Right ventricle myocardium inferior (tissue), 1 donor: ENCODE measurements at regions of chr12 and their contacts with region 1.

Region 1: DNA sequence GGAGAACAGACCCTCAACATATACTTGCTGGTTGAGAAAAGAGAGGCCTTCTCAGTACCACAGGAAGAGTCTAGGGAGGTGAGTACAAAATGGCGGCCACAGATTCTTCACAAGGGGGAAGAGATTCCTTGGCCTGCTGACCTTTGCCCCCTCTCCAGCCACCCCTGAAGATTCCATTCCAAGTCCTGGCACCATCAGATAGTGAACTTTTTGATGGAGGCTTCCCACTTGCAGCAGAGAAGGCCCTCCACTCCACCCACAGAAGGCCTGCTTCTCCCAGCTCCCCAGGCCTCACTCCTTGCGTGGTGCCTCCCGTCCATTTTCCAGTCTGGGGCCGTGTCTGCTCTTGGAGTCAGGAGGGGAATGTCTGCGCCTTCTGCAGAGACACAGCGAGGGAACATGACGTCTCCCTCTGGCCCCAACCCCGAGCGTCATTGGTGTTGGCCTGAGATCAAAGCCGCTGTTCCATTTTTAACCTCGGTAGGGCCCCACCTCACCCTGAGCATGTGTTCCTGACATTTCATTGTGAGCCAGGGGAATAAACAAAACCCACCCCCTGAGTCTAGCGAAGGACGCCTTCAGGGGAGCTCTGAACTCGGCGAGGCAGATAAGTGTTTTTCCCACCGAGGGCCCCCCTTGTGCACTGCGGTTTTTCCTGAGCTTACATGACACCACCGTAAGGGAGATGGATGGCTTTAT is 268.7 kb upstream of the TBX3 start:
- DNase-seq: no peak
- ATAC-seq: peak; percentile 91

Region 2: DNA sequence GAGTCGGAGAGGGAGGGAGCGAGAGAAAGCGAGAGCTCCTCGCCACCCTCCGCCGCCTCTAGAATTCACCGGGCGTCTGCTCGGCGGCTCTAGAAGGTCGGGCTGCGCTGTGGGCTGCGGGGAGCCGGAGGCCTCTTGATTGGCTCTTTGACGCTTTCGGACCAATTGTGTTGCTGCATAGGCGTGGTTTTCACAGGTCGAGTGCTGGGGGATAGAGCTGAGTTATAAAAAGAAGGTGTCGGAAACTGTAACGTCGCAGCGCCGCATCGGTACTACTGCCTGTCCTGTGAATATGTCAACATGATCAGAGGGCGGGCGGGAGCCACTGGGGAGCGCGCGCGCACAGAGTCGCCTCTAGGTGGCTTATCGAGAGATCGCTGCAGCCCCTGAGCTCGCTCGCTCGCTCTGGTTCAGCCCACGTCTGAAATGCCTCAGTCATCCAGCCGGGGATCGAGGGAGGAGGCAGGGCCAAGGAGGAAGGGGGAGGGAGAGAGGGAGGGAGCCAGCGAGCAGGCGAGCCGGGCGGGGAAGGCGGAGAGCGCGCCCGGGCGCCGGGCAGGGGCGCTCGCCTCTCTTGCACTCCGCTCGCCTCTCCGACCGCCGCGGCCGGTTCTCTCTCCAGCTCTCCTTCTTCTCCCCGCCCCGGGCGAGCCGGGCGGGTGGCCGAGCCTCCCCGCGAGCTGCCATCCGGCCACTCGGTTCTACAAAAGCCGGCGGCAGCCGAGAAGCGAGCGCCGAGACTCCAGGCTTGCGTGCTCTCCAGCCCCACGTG is 268.4 kb before region 1 on chr12 and contains the start of gene TBX3:
- intact Hi-C with region 1: loop called (anchors 10 kb)
- DNase-seq: peak; percentile 94
- ATAC-seq: peak; percentile 94
- total RNA-seq, gene TBX3: 11.9 TPM

Region 3: GRCh38 chr12:115044073-115044472 is 91.4 kb after region 1 on chr12:
- intact Hi-C with region 1: no loop called
- DNase-seq: no peak
- ATAC-seq: no peak